CD4-positive, alpha-beta memory T cell (primary cell): ENCODE measurements at regions of chr4 and their contacts with region 1.

Region 1: GRCh38 chr4:140153718-140154571 is at the start of gene MAML3:
- DNase-seq: peak; percentile 83 to 90 (median 86)
- H3K4me3 ChIP-seq: peak within 1 kb of the TSS; percentile 71 to 88
- H3K4me3 Mint-ChIP-seq: peak within 1 kb of the TSS; percentile 87 to 99 (median 95)
- H3K27ac ChIP-seq: peak within 1 kb of the TSS; percentile 4
- H3K27ac Mint-ChIP-seq: peak within 1 kb of the TSS; percentile 78 to 97 (median 92)
- H3K4me1 ChIP-seq: peaks cover 36% of the 10 kb centered on the region
- H3K4me1 Mint-ChIP-seq: peaks cover 21 to 57% (median 32%) of the 10 kb centered on the region in 4 donors
- H3K27me3 ChIP-seq: no peaks in the 10 kb centered on the region
- H3K27me3 Mint-ChIP-seq: peaks cover 0 to 1% of the 10 kb centered on the region in 2 donors
- total RNA-seq, gene MAML3: 2.9 to 3.7 TPM

Region 2: DNA sequence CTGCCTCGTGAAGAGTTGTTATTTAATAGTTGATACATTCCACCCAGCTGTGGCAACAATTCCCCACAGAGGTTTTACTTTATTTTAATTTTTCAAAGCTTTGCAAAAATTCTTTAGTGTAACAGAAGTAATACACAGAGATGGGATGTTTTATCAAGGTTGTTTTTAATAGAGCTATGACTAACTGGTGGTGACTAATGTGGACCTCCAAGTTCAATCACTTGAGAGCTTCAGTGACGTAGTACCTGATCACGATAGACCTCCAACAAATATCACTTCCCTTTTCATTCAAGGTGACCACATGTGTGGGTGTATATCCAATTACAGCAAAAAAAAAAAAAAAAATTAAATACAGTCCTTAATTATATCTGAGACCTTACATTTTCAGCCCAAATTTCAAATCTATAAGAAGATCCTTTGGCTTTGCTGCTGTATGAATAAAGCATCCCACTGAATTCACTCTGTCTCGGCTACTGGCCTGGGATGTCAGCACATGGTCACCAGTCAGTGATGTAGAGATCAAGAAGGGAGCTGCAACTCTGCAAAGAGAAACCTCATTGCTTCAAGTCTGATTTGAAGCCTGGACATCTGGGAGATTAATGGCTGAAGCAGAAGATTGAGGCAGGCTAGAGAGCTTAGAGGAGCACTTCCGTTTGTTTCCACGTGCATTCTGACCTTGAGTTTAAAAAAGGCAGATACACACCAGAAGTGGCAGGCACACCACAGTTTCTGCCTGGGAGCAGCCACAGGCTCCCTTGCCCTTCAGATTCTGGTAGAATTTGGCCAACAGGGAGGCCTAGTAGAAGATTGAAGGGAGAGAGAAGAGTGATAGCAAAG is 1484.2 kb before region 1 on chr4:
- CTCF ChIA-PET with region 1: no interaction called
- POLR2A ChIA-PET with region 1: no interaction called
- intact Hi-C with region 1: no loop called
- DNase-seq: no peak
- H3K4me3 ChIP-seq: no peak overlapping the region
- H3K4me3 Mint-ChIP-seq: no peak overlapping the region
- H3K27ac ChIP-seq: no peak overlapping the region
- H3K27ac Mint-ChIP-seq: no peak overlapping the region
- H3K4me1 ChIP-seq: no peaks in the 10 kb centered on the region
- H3K4me1 Mint-ChIP-seq: no peaks in the 10 kb centered on the region
- H3K27me3 ChIP-seq: no peaks in the 10 kb centered on the region
- H3K27me3 Mint-ChIP-seq: peaks cover 0 to 4% of the 10 kb centered on the region in 2 donors

Region 3: DNA sequence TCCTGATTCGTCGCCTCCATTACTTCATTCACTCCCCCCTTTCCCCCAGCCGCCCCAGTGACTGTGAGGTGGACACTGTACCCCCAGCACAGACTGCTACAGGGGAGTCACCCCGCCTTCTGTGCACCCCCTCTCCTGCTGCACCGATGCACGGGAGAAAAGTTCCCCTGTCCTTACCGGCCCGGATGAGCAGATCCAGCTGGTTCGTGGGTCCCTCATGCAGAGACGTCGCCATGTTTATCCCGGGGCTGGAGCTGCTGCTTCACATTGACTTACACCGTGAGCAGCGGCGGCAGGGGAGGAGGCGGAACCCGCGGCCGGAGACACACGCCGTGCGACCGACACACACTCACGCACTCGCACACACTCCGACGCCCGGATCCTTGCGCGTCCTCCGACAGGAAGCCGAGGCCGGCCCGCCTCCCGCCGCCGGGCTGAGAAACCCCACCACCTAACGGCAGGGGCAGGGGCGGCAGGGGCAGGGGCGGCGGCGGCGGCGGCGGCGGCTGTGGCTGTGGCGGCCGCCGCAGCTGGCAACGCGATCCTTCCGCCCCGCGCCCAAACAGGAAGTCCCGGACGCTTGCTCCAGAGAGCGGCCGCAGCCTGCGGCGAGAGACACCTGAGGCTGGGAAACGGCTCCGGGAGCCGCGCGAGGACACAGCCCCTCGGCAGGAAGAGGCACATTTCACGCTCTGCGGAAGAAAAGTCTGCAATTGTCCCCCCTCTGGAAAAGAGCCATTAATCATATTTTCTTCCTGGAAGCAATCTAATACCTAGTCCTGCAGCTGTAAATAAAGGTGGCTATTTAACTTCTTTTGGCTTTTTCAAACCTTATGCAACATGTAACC is 1069.8 kb before region 1 on chr4:
- CTCF ChIA-PET with region 1: no interaction called
- POLR2A ChIA-PET with region 1: interaction called, 3 read pairs
- intact Hi-C with region 1: loop called (anchors 5 kb)
- DNase-seq: peak; percentile 84 to 89 (median 85)
- H3K4me3 ChIP-seq: peak overlapping the region; percentile 73 to 99
- H3K4me3 Mint-ChIP-seq: peak overlapping the region; percentile 89 to 100 (median 92)
- H3K27ac ChIP-seq: peak overlapping the region; percentile 96
- H3K27ac Mint-ChIP-seq: peak overlapping the region; percentile 91 to 97 (median 94)
- H3K4me1 ChIP-seq: peaks cover 37% of the 10 kb centered on the region
- H3K4me1 Mint-ChIP-seq: peaks cover 26 to 52% (median 36%) of the 10 kb centered on the region in 4 donors
- H3K27me3 ChIP-seq: no peaks in the 10 kb centered on the region
- H3K27me3 Mint-ChIP-seq: no peaks in the 10 kb centered on the region

Region 4: GRCh38 chr4:139453371-139454110 is 700.4 kb before region 1 on chr4:
- CTCF ChIA-PET with region 1: no interaction called
- POLR2A ChIA-PET with region 1: interaction called, 4 read pairs
- intact Hi-C with region 1: loop called (anchors 5 kb)
- DNase-seq: peak; percentile 97 to 99 (median 98)
- H3K4me3 ChIP-seq: peak overlapping the region; percentile 68 to 71
- H3K4me3 Mint-ChIP-seq: peak overlapping the region; percentile 95 to 99 (median 97)
- H3K27ac ChIP-seq: peak overlapping the region; percentile 89
- H3K27ac Mint-ChIP-seq: peak overlapping the region; percentile 98 to 100 (median 99)
- H3K4me1 ChIP-seq: peaks cover 59% of the 10 kb centered on the region
- H3K4me1 Mint-ChIP-seq: peaks cover 48 to 73% (median 61%) of the 10 kb centered on the region in 4 donors
- H3K27me3 ChIP-seq: no peaks in the 10 kb centered on the region
- H3K27me3 Mint-ChIP-seq: no peaks in the 10 kb centered on the region

Region 5: DNA sequence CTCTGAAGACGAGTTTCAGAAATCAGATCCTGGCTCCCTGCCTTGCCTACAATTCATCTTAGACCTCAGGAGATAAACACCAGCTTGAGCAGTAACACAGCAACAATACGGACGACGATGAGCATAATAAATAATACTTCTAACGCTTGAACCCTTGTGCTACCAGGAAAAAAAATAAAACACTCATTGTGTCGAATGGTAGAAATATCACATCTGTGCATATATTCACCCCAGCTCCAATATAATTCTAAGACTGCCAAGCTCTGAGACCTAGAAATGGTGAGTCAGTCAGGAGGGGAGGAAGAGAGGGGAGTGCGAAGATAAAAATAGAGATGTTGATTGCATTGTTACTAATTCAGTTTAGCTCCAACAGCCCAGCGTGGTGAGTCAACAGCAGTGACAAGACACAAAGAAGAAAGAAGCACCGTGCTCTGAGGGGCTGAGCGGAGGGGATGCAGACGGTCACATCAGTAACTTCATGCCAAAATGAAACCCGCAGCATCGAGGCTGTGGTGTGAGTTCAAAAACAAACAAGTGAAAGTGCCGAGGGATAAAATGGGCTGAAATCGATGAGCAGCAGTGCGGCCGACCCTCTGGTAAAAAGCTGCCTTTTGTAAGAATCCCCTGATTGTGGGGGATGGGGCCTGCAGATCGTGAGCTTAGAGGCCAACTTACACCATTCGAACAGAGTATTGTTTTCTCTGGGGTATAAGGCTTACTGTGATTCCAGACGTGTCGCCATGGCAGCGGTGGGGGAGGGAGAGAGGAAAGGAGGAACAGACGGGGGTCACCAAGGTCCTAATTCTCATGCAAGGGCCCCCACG is 338.0 kb before region 1 on chr4:
- CTCF ChIA-PET with region 1: no interaction called
- POLR2A ChIA-PET with region 1: no interaction called
- intact Hi-C with region 1: no loop called
- DNase-seq: no peak
- H3K4me3 ChIP-seq: no peak overlapping the region
- H3K4me3 Mint-ChIP-seq: no peak overlapping the region
- H3K27ac ChIP-seq: no peak overlapping the region
- H3K27ac Mint-ChIP-seq: no peak overlapping the region
- H3K4me1 ChIP-seq: no peaks in the 10 kb centered on the region
- H3K4me1 Mint-ChIP-seq: no peaks in the 10 kb centered on the region
- H3K27me3 ChIP-seq: no peaks in the 10 kb centered on the region
- H3K27me3 Mint-ChIP-seq: peaks cover 1% of the 10 kb centered on the region in 2 donors

Region 6: GRCh38 chr4:140012688-140013486 is 141.1 kb before region 1 on chr4:
- CTCF ChIA-PET with region 1: interaction called, 4 read pairs
- POLR2A ChIA-PET with region 1: no interaction called
- intact Hi-C with region 1: loop called (anchors 2 kb)
- DNase-seq: peak; percentile 56 to 64 (median 61)
- H3K4me3 ChIP-seq: no peak overlapping the region
- H3K4me3 Mint-ChIP-seq: no peak overlapping the region
- H3K27ac ChIP-seq: no peak overlapping the region
- H3K27ac Mint-ChIP-seq: no peak overlapping the region
- H3K4me1 ChIP-seq: no peaks in the 10 kb centered on the region
- H3K4me1 Mint-ChIP-seq: peaks cover 0 to 3% (median under 1%) of the 10 kb centered on the region in 4 donors
- H3K27me3 ChIP-seq: no peaks in the 10 kb centered on the region
- H3K27me3 Mint-ChIP-seq: peaks cover 6 to 14% of the 10 kb centered on the region in 2 donors

Region 7: DNA sequence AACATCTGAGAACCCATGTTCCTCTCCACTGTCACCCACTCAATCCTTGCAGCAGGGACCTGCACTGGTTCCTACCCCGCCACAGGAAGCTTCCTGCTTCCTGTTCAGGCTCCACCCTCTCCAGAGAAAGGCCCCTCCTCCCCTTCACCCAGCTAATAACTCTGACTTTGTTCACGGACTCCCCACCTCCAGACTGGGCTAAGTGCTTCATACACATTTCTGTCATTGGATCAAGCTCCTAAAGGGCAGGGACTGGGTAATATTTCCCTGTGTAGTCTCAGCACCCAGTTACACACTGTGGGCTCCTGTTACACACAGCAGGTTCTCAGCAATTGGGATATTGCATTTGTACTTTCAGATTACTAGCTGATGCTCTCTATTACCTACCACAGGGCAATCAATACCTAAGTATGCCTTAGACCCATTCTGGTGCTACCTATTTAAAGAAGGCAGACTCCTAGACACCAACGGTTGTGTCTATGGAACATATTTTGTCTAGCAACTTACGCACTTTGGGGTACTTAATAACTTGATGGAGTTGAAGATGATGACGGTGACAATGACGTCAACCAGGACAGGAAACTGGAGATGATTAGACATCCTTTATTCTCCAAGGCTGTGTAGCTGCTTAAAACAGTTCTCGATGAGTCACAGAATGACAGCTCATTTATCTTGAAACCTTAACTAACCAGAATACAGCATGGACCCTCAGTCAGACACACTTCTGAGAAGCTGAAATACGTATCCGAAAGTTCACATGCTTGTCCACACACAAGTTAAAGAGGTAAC is 58.1 kb before region 1 on chr4:
- CTCF ChIA-PET with region 1: interaction called, 8 read pairs
- POLR2A ChIA-PET with region 1: interaction called, 20 read pairs
- intact Hi-C with region 1: loop called (anchors 1 kb)
- DNase-seq: peak; percentile 59 to 91 (median 72)
- H3K4me3 ChIP-seq: peak overlapping the region; percentile 4 to 21
- H3K4me3 Mint-ChIP-seq: peak overlapping the region; percentile 76 to 85 (median 80)
- H3K27ac ChIP-seq: peak overlapping the region; percentile 61
- H3K27ac Mint-ChIP-seq: peak overlapping the region; percentile 82 to 94 (median 93)
- H3K4me1 ChIP-seq: peaks cover 48% of the 10 kb centered on the region
- H3K4me1 Mint-ChIP-seq: peaks cover 39 to 51% (median 50%) of the 10 kb centered on the region in 4 donors
- H3K27me3 ChIP-seq: no peaks in the 10 kb centered on the region
- H3K27me3 Mint-ChIP-seq: no peaks in the 10 kb centered on the region

Region 8: GRCh38 chr4:140373328-140374129 is 219.6 kb after region 1 on chr4 and contains the start of gene SCOC:
- CTCF ChIA-PET with region 1: interaction called, 4 read pairs
- POLR2A ChIA-PET with region 1: interaction called, 9 read pairs
- intact Hi-C with region 1: loop called (anchors 1 kb)
- DNase-seq: peak; percentile 95 to 99 (median 96)
- H3K4me3 ChIP-seq: peak within 1 kb of the TSS; percentile 72 to 75
- H3K4me3 Mint-ChIP-seq: peak within 1 kb of the TSS in 3 of 8 donors; percentile 83 to 90 (median 87)
- H3K27ac ChIP-seq: peak within 1 kb of the TSS; percentile 69
- H3K27ac Mint-ChIP-seq: peak within 1 kb of the TSS in 6 of 7 donors; percentile 47 to 87 (median 76)
- H3K4me1 ChIP-seq: peaks cover 23% of the 10 kb centered on the region
- H3K4me1 Mint-ChIP-seq: peaks cover 24 to 37% (median 28%) of the 10 kb centered on the region in 4 donors
- H3K27me3 ChIP-seq: no peaks in the 10 kb centered on the region
- H3K27me3 Mint-ChIP-seq: no peaks in the 10 kb centered on the region
- total RNA-seq, gene SCOC: 21.8 to 22.8 TPM

Region 9: GRCh38 chr4:141676087-141676670 is 1522.2 kb after region 1 on chr4:
- CTCF ChIA-PET with region 1: no interaction called
- POLR2A ChIA-PET with region 1: no interaction called
- intact Hi-C with region 1: no loop called
- DNase-seq: no peak
- H3K4me3 ChIP-seq: no peak overlapping the region
- H3K4me3 Mint-ChIP-seq: no peak overlapping the region
- H3K27ac ChIP-seq: no peak overlapping the region
- H3K27ac Mint-ChIP-seq: no peak overlapping the region
- H3K4me1 ChIP-seq: no peaks in the 10 kb centered on the region
- H3K4me1 Mint-ChIP-seq: peaks cover 0 to 11% (median 4%) of the 10 kb centered on the region in 4 donors
- H3K27me3 ChIP-seq: no peaks in the 10 kb centered on the region
- H3K27me3 Mint-ChIP-seq: no peaks in the 10 kb centered on the region